Dendritic cell treated with granulocyte-macrophage colony-stimulating factor and Interleukin-4, amounts not matched to agents 40 ng/mL and 50 ng/mL, for 4 days (primary cell): ENCODE measurements at regions of chr4 and their contacts with region 1.

Region 1: DNA sequence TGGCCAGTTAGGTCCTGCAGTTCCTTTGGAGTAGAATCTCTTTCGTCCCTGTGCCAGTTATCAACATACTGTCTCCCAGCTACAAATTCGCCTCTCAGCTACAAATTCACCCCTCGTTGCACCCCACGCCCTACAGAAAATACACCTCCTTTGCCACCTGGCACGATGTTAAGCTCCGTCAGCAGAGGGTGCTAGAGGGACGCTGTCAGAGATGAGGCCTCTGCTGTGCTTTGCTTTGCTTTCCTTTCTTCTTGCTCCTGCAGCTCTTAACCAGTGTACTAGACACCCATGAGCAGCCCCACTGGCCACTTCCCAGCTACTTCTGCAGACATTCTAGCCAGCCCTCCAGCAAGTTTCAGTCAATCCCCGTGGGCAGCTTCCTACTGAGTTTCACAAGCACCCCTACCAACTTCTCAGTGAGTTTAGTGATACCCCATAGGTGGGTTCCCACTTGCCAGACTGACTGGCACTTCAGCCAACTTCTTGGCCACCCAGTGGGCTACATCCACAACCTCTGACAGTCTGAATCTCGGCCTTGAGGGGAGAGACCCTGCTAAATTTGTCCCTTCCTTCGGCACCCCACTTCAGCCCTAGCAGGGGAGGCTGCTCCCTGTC is 21.8 kb downstream of the HAUS3 start:
- H3K4me3 Mint-ChIP-seq: no peak overlapping the region
- H3K27ac Mint-ChIP-seq: no peak overlapping the region
- H3K4me1 Mint-ChIP-seq: peaks cover 9% of the 10 kb centered on the region
- H3K27me3 Mint-ChIP-seq: no peaks in the 10 kb centered on the region

Region 2: GRCh38 chr4:1981251-1982058 is 238.7 kb before region 1 on chr4:
- intact Hi-C with region 1: no loop called
- H3K4me3 Mint-ChIP-seq: no peak overlapping the region
- H3K27ac Mint-ChIP-seq: no peak overlapping the region
- H3K4me1 Mint-ChIP-seq: no peaks in the 10 kb centered on the region
- H3K27me3 Mint-ChIP-seq: no peaks in the 10 kb centered on the region

Region 3: DNA sequence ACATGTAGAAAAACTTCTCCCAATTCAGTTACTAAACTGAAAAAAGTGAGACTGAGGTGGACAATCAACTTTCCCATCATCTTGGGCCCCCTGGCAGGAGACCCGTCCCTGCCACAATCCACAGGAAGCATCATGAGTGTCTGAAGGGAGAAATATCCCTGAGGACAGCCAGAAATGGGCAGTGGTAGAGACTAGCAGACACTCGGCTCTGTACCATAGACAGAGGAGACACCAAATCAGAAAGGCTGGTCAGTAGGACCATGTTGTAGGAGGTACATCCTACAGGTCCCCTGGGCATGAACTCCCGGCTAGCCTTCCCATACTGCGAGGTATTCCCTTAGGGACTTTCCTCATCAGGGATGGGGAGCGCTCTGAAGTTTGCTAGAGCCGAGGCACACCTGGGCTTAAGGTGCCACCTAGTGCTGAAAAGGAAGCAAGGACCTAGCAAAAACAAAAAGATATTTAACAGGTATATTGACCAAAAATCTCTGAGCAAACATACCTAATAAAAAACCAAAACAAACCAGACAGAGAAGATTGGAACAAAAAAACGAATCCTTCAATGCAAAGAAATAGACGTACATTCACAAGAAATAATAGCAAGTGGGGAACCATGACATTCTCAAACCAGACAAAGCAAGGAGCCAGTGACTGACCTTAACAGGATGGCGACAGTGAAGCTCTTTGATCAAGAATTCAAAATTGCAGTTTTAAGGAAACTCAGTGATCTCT is 33.8 kb before region 1 on chr4:
- intact Hi-C with region 1: no loop called
- H3K4me3 Mint-ChIP-seq: no peak overlapping the region
- H3K27ac Mint-ChIP-seq: no peak overlapping the region
- H3K4me1 Mint-ChIP-seq: peaks cover 15% of the 10 kb centered on the region
- H3K27me3 Mint-ChIP-seq: peaks cover 2% of the 10 kb centered on the region

Region 4: DNA sequence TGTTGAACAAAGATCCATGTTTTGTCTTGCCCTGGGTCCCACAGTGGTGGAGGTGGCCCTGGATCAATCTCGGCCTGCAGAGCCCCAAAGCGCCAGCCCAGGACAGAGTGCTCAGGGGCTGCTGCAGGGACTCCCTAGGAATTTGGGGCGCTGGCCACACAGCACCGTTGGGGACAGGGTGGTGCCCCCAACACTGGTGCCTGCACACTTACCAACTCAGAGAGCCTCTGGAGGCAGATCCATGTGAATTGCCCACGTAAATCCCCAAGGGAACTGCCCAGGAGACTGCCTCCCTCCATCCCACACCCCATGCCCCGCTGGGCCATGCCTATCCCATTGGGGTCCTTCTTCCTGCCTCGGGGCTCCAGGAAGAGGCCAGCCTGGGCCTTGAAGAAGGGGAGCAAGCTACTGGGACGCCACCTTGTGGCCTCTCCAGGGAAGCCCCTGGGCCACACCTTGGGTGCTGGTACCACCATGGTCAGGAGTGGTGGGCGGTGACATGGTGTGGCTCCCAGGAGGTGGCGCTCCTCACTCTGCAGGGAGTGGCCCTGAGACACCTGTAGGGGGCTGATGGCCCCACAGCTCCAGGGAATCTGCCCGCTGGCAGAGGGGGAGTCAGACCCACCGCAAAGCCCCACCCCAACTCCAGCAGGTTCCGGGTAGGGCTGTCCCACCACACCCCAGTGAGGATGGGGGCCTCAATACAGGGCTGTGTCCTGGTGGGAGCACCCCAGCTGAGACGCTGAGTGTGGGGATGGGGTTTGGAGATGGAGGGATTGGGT is 221.5 kb after region 1 on chr4:
- intact Hi-C with region 1: loop called (anchors 1 kb)
- H3K4me3 Mint-ChIP-seq: no peak overlapping the region
- H3K27ac Mint-ChIP-seq: no peak overlapping the region
- H3K4me1 Mint-ChIP-seq: no peaks in the 10 kb centered on the region
- H3K27me3 Mint-ChIP-seq: no peaks in the 10 kb centered on the region